AG04450 (cell line): ENCODE measurements at regions of chr3 and their contacts with region 1.

Region 1: DNA sequence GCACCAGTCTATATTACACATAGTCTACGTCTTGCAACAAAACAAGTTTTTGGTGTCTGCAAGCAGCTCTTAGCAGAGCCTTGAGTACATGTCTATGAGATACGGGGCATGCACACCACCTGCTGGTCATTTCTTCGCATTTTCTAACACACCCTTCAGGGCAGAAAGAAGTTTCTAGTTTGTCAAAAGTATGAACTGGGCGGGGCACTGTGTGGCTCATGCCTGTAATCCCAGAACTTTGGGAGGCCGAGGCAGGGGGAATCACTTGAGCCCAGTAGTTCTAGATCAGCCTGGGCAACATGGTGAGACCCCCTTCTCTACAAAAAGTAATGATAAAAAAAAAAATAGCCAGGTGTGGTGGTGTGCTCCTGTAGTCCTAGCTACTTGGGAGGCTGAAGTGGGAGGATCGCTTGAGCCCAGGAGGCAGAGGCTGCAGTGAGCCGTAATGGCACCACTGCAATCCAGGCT is 64.2 kb upstream of the ARL8B start:
- DNase-seq: peak; percentile 67
- H3K4me3 ChIP-seq: no peak overlapping the region
- H3K27ac ChIP-seq: no peak overlapping the region
- H3K27me3 ChIP-seq: no peaks in the 10 kb centered on the region
- CTCF ChIP-seq: peak; percentile 82

Region 2: DNA sequence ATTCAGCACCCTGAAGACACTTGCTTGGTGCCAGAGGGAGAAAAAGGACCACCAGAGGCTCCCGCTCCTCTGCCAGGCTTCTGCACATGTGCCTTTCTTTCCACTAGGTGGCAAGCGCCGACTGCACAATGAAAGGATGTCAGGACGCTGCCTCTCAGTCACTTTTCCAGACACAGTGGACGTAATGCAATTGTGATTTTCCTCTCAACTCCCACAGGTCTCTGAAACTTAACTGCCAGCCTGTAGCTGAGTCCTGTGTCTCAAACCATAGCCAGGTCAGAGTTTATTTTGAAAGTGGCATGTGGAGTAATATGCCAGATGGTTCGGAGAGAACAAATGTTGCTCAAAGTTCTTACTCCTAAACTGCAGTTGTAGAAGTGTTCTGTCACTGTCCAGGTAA is 401.8 kb before region 1 on chr3:
- CTCF ChIA-PET with region 1: interaction called, 55 read pairs
- POLR2A ChIA-PET with region 1: no interaction called
- DNase-seq: peak; percentile 44
- H3K4me3 ChIP-seq: no peak overlapping the region
- H3K27ac ChIP-seq: no peak overlapping the region
- H3K27me3 ChIP-seq: no peaks in the 10 kb centered on the region
- CTCF ChIP-seq: peak; percentile 98

Region 3: GRCh38 chr3:4720279-4721075 is 337.4 kb before region 1 on chr3:
- CTCF ChIA-PET with region 1: interaction called, 23 read pairs
- POLR2A ChIA-PET with region 1: no interaction called
- DNase-seq: no peak
- H3K4me3 ChIP-seq: no peak overlapping the region
- H3K27ac ChIP-seq: no peak overlapping the region
- H3K27me3 ChIP-seq: no peaks in the 10 kb centered on the region
- CTCF ChIP-seq: peak; percentile 25; the same call in 1 of the 2 replicates

Region 4: DNA sequence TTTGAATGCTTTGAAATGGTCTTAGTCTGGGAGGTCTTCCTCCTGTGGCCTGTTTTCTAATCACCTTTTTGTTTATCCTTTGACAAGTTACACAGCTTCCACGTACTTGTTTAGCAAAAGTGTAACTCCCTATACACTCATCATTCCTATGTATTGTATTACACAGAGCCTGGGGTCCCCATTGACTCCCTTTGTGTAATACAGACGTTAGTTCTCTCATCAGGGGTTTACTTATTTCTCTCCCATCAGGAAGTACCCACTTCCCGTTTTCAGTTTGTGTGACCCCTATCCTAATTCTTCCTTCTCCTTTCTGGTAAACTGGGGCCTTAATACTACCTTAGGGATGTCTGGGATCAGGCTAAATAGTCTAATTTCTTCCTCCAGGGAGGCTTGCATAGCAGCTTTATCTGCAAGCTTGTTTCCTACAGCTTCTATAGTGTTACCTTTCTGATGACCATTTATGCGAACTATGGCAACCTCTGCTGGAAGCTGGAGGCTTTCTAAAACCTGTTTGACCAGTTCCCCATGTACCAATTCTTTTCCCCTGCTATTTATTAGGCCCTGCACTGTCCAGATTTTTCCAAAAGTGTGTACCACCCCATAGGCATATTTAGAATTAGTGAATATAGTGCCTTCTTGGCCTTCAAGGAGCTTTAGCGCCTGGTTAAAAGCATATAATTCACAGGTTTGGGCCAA is 86.6 kb after region 1 on chr3:
- CTCF ChIA-PET with region 1: no interaction called
- POLR2A ChIA-PET with region 1: no interaction called
- DNase-seq: no peak
- H3K4me3 ChIP-seq: no peak overlapping the region
- H3K27ac ChIP-seq: no peak overlapping the region
- H3K27me3 ChIP-seq: no peaks in the 10 kb centered on the region
- CTCF ChIP-seq: no peak